A673 (cell line): ENCODE measurements at regions of chr14 and their contacts with region 1.

Region 1: DNA sequence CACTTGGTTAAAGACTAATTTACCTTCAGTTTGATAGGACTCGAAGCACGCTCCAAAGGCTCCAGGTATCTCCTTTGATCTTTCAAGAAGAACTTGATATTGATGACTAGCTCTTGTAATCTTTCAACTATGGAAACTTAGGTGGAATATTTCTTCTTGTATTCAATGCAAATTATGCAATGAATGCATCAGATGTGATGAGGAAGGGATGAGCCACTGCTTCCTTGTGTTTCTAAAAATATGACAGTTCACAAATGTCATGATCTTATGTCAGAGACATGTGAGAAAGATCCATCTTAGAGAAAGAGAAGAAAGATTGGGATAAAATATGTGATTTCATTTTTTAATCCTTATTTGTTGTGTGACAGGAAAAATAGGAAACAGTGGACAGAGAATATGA is 9.9 kb downstream of the RNASE9 start:
- DNase-seq: no peak
- H3K4me3 ChIP-seq: no peak overlapping the region
- H3K27ac ChIP-seq: no peak overlapping the region
- H3K4me1 ChIP-seq: no peaks in the 10 kb centered on the region
- H3K27me3 ChIP-seq: no peaks in the 10 kb centered on the region
- CTCF ChIP-seq: no peak

Region 2: DNA sequence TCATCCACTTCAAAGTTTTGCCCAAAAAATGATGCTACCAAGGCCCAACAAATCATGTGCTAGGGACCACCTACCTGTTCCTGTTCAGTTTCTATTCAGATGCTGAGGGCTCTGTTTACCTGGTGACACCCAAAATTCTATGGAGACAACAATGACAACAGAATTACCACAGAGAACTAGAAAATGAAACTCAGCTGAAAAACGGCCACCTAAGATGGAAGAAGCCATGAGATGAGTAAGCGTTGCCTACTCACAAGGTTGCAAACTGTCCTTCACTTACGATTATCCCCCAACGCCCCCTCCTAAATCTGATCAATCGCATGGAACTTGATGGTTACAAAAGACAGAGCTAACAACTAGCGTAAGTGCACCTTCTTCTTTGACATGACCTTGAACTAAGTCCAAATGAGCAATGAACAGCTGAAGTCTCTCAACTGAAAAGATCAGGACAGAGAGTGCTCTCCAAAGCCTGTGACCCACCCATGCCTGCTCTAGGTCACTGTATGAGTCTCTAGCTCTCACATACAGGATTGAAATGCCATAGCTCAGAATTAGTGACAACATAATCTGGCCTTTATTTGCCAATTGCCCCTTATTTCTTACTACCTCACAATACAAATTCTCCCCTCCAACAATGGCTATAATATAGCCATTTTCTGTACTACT is 36.7 kb after region 1 on chr14 and contains the start of gene RNASE11:
- CTCF ChIA-PET with region 1: no interaction called
- POLR2A ChIA-PET with region 1: no interaction called
- intact Hi-C with region 1: loop called (anchors 5 kb)
- DNase-seq: no peak
- H3K4me3 ChIP-seq: no peak within 1 kb of the TSS
- H3K27ac ChIP-seq: no peak within 1 kb of the TSS
- H3K4me1 ChIP-seq: no peaks in the 10 kb centered on the region
- H3K27me3 ChIP-seq: no peaks in the 10 kb centered on the region
- CTCF ChIP-seq: no peak
- total RNA-seq, gene RNASE11: not detected in 2 replicates

Region 3: DNA sequence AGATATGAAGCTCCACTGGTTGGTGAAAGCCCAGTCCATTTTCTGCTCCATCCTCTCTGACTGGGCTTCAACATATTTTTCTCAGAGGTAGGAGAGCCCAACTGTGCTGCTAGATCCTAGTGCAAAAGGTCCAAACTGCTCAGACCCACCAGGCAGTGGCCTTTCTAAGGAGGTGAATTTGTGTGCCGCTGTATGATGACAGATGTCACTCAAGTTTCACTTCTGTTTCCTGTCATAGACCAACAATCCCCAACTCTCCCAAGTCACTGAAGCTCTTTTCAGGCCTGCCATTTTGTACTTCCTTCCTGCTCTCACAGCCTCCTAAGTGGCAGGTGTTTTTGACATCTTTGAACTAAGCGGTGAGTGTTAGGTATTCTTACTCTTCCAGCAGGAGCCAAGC is 117.0 kb after region 1 on chr14:
- CTCF ChIA-PET with region 1: no interaction called
- POLR2A ChIA-PET with region 1: no interaction called
- intact Hi-C with region 1: no loop called
- DNase-seq: no peak
- H3K4me3 ChIP-seq: no peak overlapping the region
- H3K27ac ChIP-seq: no peak overlapping the region
- H3K4me1 ChIP-seq: no peaks in the 10 kb centered on the region
- H3K27me3 ChIP-seq: peaks cover 10% of the 10 kb centered on the region
- CTCF ChIP-seq: no peak